ENCODE measurements at regions of chr9 and their contacts with region 1.

Region 1: GRCh38 chr9:124624735-124624992 is 117.5 kb upstream of the NR5A1 start:
- DNase-seq: no peak
- H3K4me3 Mint-ChIP-seq: no peak overlapping the region
- H3K27ac Mint-ChIP-seq: no peak overlapping the region
- H3K4me1 Mint-ChIP-seq: peaks cover 10% of the 10 kb centered on the region
- H3K27me3 Mint-ChIP-seq: peaks cover 11% of the 10 kb centered on the region

Region 2: GRCh38 chr9:124671861-124672260 is 47.2 kb after region 1 on chr9:
- intact Hi-C with region 1: loop called (anchors 2 kb)
- DNase-seq: no peak
- H3K4me3 Mint-ChIP-seq: no peak overlapping the region
- H3K27ac Mint-ChIP-seq: no peak overlapping the region
- H3K4me1 Mint-ChIP-seq: peaks cover 22% of the 10 kb centered on the region
- H3K27me3 Mint-ChIP-seq: peaks cover 11% of the 10 kb centered on the region

Measured in activated T-helper 2 cell treated with anti-CD3 and anti-CD28 coated beads, Interferon-gamma antibody, Interleukin-2, Interleukin-4, amounts not matched to agents 10 μg/mL and 5 μg/mL and 100 μg/mL, durations not matched to agents 14 hours and 24 hours and 36 hours (primary cell).